Cardiac septum (tissue), 1 donor: ENCODE measurements at regions of chr21 and their contacts with region 1.

Region 1: GRCh38 chr21:15064576-15065391 is at the start of gene NRIP1:
- DNase-seq: peak; percentile 96
- total RNA-seq, gene NRIP1: 16.7 TPM

Region 2: DNA sequence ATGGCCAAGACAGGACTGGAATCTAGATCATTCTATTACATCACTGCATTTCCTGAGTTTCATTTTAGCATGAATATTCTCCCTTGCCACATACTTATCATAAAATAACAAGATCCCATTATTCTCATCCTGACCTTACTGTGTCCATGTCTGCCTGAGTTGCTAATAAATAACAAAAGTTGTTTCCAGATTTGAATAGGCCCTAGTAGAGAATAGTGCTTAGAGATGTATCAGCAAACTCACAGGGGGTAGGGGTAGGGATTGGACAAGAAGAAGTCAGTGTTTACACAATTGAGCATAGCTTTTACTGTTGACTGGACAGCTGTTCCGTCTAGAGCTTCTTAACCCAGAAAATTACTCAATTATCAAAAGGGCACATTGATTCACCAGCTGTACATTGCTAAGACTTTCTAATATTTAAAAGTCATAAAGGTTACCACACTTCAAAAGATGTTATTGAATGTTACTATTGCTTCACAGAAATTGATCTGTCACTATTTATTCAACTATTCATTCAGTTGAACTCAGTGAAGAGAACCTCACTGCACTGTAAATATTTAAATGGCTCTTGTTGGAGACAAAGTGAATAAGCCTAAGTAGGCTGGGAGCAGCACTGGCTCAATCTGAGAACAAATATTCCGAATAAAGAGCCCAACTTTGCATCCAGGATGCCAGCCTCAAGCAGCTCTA is 121.8 kb before region 1 on chr21:
- intact Hi-C with region 1: no loop called
- DNase-seq: no peak

Region 3: DNA sequence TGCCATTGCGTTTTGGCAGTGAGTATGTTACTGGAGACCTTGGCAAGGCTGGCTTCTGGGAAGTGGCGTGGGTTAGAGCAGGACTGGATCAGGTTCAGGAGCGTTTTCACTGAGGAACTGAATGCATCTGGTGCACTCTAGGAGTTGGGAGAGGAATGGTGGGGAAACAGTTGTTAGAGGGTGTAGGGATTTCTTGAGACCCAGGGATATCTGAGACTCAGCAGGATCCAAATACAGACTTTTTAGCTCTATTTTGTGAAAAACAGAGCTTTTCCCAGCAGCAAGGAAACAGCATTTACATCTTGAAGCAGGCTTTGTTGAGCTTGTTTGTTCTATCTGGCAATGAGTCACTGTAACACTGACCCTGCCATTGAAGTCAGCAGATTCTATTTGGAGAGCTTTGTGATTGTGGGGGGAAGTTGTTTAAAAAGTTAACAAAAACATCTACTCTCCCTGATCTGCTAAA is 56.9 kb after region 1 on chr21:
- intact Hi-C with region 1: no loop called
- DNase-seq: no peak

Region 4: GRCh38 chr21:15221799-15222386 is 157.1 kb after region 1 on chr21:
- intact Hi-C with region 1: loop called (anchors 10 kb)
- DNase-seq: no peak

Region 5: GRCh38 chr21:15483138-15483780 is 418.5 kb after region 1 on chr21:
- intact Hi-C with region 1: loop called (anchors 5 kb)
- DNase-seq: peak; percentile 90